Calu3 (cell line): ENCODE measurements at regions of chrX and their contacts with region 1.

Region 1: GRCh38 chrX:120499301-120500072 is 30.4 kb upstream of the LAMP2 start:
- DNase-seq: no peak
- H3K4me3 Mint-ChIP-seq: no peak overlapping the region
- H3K27ac Mint-ChIP-seq: peak overlapping the region; percentile 13
- H3K4me1 Mint-ChIP-seq: no peaks in the 10 kb centered on the region
- H3K27me3 Mint-ChIP-seq: no peaks in the 10 kb centered on the region
- CTCF ChIP-seq: no peak

Region 2: DNA sequence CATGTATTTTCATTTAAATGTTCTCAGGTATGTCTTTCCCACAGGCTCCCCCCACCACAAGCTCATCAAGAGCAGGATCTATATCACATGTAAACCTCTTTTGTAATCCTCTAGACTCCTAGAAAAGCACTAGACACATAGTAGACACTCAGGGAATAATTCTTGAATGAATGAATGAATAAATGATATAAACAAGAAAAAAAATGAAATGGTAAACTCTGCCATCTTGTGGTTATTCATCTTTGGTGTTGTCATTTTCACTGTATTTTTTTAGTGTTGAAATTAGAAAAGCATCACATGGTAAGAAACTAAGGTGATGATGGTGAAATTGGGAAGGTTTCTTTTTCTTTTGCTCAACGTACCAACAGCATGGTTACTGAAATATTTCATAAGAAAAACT is 164.6 kb after region 1 on chrX:
- CTCF ChIA-PET with region 1: no interaction called
- intact Hi-C with region 1: loop called (anchors 1 kb)
- DNase-seq: no peak
- H3K4me3 Mint-ChIP-seq: no peak overlapping the region
- H3K27ac Mint-ChIP-seq: no peak overlapping the region
- H3K4me1 Mint-ChIP-seq: peaks cover 8% of the 10 kb centered on the region
- H3K27me3 Mint-ChIP-seq: no peaks in the 10 kb centered on the region
- CTCF ChIP-seq: no peak

Region 3: GRCh38 chrX:120718969-120719368 is 219.5 kb after region 1 on chrX:
- CTCF ChIA-PET with region 1: no interaction called
- intact Hi-C with region 1: no loop called
- DNase-seq: no peak
- H3K4me3 Mint-ChIP-seq: no peak overlapping the region
- H3K27ac Mint-ChIP-seq: no peak overlapping the region
- H3K4me1 Mint-ChIP-seq: no peaks in the 10 kb centered on the region
- H3K27me3 Mint-ChIP-seq: peaks cover 13% of the 10 kb centered on the region
- CTCF ChIP-seq: no peak

Region 4: DNA sequence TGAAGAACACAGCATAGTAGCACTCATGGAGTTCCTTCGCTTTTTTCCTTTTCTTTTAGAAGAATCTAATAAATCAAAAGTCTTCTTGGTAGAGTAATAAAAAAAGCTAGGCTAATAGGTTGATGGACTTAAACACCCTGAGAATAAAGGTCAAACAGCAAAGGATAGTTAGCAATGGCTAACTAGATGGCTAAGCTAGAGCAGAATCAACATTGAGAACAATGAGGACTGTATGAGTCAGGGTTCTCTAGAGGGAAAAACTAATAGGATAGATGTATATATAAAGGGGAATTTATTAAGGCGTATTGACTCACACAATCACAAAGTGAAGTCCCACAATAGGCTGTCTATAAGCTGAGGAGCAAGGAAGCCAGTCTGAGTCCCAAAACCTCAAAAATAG is 1098.9 kb after region 1 on chrX:
- CTCF ChIA-PET with region 1: no interaction called
- intact Hi-C with region 1: no loop called
- DNase-seq: peak; percentile 9
- H3K4me3 Mint-ChIP-seq: peak overlapping the region; percentile 17
- H3K27ac Mint-ChIP-seq: peak overlapping the region; percentile 85
- H3K4me1 Mint-ChIP-seq: peaks cover 25% of the 10 kb centered on the region
- H3K27me3 Mint-ChIP-seq: no peaks in the 10 kb centered on the region
- CTCF ChIP-seq: no peak